Dendritic cell treated with granulocyte-macrophage colony-stimulating factor and Interleukin-4, amounts not matched to agents 40 ng/mL and 50 ng/mL, for 4 days (primary cell): ENCODE measurements at regions of chr1 and their contacts with region 1.

Region 1: GRCh38 chr1:168572633-168573032 is 3.8 kb upstream of the XCL1 start:
- H3K4me3 Mint-ChIP-seq: no peak overlapping the region
- H3K27ac Mint-ChIP-seq: no peak overlapping the region
- H3K4me1 Mint-ChIP-seq: no peaks in the 10 kb centered on the region
- H3K27me3 Mint-ChIP-seq: no peaks in the 10 kb centered on the region

Region 2: GRCh38 chr1:168439456-168440375 is 132.9 kb before region 1 on chr1:
- intact Hi-C with region 1: loop called (anchors 1 kb)
- H3K4me3 Mint-ChIP-seq: peak overlapping the region; percentile 45
- H3K27ac Mint-ChIP-seq: no peak overlapping the region
- H3K4me1 Mint-ChIP-seq: peaks cover 11% of the 10 kb centered on the region
- H3K27me3 Mint-ChIP-seq: no peaks in the 10 kb centered on the region